ENCODE measurements at regions of chr16 and their contacts with region 1.

Region 1: DNA sequence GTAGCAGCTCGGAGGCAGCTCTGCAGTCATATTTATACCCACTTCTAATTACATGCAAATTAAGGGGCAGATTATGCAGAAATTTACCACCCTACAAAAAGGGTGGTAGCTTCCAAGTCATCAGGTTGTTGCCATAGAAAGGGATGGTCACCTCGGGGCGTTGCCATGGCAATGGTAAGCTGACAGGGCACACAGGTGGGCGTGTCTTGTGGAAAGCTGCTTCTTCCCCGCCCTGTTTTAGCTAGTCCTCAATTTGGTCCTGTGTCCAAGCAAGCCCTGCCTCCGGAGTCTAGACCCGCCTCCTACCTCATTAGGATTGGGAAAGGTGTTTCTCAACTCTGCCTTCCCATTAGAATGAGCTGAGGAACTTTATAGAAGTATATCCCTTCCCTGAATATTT is 98.7 kb downstream of the HS3ST2 start:
- DNase-seq: no peak
- ATAC-seq: no peak
- H3K4me3 ChIP-seq: no peak overlapping the region
- H3K27ac ChIP-seq: no peak overlapping the region
- H3K4me1 ChIP-seq: no peaks in the 10 kb centered on the region
- H3K27me3 ChIP-seq: peaks cover 0 to 3% (median 0%) of the 10 kb centered on the region in 9 donors
- CTCF ChIP-seq: no peak
- POLR2A ChIP-seq: no peak

Region 2: GRCh38 chr16:22888791-22889190 is 23.9 kb before region 1 on chr16:
- intact Hi-C with region 1: loop called in 1 of 10 experiments (anchors 2 kb)
- DNase-seq: no peak
- ATAC-seq: no peak
- H3K4me3 ChIP-seq: no peak overlapping the region
- H3K27ac ChIP-seq: no peak overlapping the region
- H3K4me1 ChIP-seq: no peaks in the 10 kb centered on the region
- H3K27me3 ChIP-seq: peaks cover 0 to 12% (median 0%) of the 10 kb centered on the region in 9 donors
- CTCF ChIP-seq: no peak
- POLR2A ChIP-seq: no peak

Region 3: DNA sequence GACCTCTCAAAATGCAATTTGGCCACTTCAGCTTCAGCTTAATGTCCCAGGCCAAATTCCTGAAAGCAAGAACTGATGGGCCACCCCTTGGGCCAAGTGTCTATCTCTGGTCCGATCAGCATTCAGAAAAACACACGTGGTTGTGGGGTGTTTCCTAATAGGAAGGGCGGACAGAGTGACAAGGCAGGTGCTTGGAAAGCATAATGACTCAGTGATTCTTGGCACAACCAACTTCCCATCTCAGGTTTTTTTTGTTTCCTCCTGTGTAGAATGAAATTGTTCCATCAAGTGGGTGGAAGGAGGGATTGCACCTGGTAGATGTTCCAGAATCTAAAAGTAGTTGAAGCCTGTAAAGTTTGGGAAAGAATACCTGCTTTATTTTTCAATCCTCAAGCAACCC is 56.9 kb after region 1 on chr16:
- intact Hi-C with region 1: loop called in 1 of 10 experiments (anchors 10 kb)
- DNase-seq: peak in 1 of 5 donors; percentile 20
- ATAC-seq: peak in 3 of 4 donors; percentile 61 to 80 (median 61)
- H3K4me3 ChIP-seq: no peak overlapping the region
- H3K27ac ChIP-seq: peak overlapping the region in 1 of 12 donors; percentile 68
- H3K4me1 ChIP-seq: peaks cover 0 to 22% (median 11%) of the 10 kb centered on the region in 12 donors
- H3K27me3 ChIP-seq: peaks cover 0 to 5% (median 0%) of the 10 kb centered on the region in 9 donors
- CTCF ChIP-seq: peak in 1 of 12 donors; percentile 31
- POLR2A ChIP-seq: no peak